Thyroid gland (tissue), 4 donors: ENCODE measurements at regions of chr11 and their contacts with region 1.

Region 1: DNA sequence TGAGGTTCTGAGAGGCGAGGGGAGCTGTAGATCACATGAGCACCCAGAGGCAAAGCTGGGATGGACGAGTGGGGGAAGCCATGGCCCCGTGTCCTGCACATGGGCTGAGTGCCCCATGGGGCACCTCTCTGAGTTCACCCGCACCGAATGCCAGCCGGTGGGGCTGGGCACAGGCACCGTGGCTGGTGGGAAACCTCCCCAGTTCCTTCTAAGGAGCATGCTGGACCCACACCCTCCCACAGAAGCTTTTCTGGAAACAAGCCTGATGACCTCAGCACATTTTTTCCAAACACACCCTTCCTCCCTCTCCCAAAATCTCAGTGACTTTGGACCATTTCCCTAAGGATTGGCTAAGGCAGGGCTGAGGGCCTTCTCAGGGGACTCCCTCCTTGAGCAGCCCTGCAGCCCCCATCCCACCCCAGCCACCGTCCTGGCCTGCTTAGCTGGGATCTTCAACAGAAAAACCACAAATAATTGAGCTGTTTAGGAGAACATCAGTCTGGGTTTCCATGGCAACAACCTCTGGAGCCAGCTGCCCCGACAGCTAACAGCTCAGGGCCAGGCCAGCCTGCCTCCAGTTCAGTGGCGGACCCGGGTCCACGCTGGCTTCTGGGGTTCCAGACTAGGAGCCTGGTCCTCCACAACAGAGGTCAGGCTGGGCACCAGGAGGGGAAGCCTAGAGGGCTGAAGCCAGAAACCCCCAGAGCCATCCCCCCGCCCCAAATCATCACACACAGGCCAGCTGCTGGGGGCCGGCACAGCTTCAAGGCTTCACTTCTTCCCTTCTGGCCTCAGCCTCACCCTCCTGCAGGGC is 18.1 kb upstream of the LINC01488 start:
- DNase-seq: no peak
- H3K4me3 ChIP-seq: no peak overlapping the region
- H3K27ac ChIP-seq: no peak overlapping the region
- H3K4me1 ChIP-seq: peaks cover 0 to 36% of the 10 kb centered on the region in 2 donors
- H3K27me3 ChIP-seq: no peaks in the 10 kb centered on the region
- CTCF ChIP-seq: no peak
- POLR2A ChIP-seq: no peak

Region 2: GRCh38 chr11:69444381-69445130 is 18.8 kb before region 1 on chr11:
- intact Hi-C with region 1: no loop called
- DNase-seq: peak; percentile 97
- H3K4me3 ChIP-seq: no peak overlapping the region
- H3K27ac ChIP-seq: peak overlapping the region; percentile 75 to 91 (median 75)
- H3K4me1 ChIP-seq: peaks cover 49 to 63% of the 10 kb centered on the region in 2 donors
- H3K27me3 ChIP-seq: no peaks in the 10 kb centered on the region
- CTCF ChIP-seq: peak in 4 of 6 experiments; percentile 42 to 52 (median 47)
- POLR2A ChIP-seq: peak in 1 of 2 donors; percentile 41

Region 3: DNA sequence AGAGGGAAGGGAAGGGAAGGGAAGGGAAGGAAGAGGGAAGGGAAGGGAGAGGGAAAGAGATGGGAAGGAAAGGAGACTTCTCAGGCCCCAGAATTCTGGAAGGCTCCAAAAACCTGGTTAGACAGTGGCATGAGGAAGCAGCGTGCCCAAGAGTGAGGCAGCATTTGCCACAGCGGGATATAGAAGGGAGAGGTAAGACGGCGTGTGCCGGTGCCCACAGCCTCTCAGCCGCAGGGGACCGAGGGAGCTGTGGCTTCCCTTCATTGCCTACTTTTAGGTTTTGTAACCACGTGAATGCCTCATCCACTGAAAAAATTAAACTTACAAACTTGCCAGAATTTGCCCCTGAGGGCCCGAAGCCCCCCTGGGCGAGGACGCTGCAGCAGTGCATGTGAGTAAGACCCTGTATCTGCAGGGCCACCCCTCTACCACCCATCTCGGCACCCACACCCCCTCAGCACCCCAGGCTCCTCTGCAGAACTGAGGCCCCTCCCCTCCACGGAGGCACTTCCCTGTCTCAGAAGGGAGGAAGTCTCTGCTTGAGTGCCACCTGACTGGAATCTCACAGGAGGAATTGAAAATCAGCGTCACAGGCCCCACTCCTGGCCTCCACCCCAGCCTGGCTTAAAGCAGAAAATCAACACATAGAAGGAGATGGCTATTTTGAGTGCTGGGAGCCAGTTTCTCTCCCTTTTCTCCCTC is 76.2 kb after region 1 on chr11:
- intact Hi-C with region 1: loop called (anchors 10 kb)
- DNase-seq: peak; percentile 75 to 81
- H3K4me3 ChIP-seq: no peak overlapping the region
- H3K27ac ChIP-seq: peak overlapping the region; percentile 63 to 88 (median 69)
- H3K4me1 ChIP-seq: peaks cover 28 to 43% of the 10 kb centered on the region in 2 donors
- H3K27me3 ChIP-seq: no peaks in the 10 kb centered on the region
- CTCF ChIP-seq: no peak
- POLR2A ChIP-seq: peak in 1 of 2 donors; percentile 50

Region 4: GRCh38 chr11:69683764-69684333 is 220.5 kb after region 1 on chr11:
- intact Hi-C with region 1: no loop called
- DNase-seq: peak; percentile 39
- H3K4me3 ChIP-seq: no peak overlapping the region
- H3K27ac ChIP-seq: no peak overlapping the region
- H3K4me1 ChIP-seq: peaks cover 0 to 3% of the 10 kb centered on the region in 2 donors
- H3K27me3 ChIP-seq: no peaks in the 10 kb centered on the region
- CTCF ChIP-seq: peak in 3 of 6 experiments; percentile 37 to 43 (median 39)
- POLR2A ChIP-seq: no peak